ENCODE measurements at regions of chr9 and their contacts with region 1.

Region 1: DNA sequence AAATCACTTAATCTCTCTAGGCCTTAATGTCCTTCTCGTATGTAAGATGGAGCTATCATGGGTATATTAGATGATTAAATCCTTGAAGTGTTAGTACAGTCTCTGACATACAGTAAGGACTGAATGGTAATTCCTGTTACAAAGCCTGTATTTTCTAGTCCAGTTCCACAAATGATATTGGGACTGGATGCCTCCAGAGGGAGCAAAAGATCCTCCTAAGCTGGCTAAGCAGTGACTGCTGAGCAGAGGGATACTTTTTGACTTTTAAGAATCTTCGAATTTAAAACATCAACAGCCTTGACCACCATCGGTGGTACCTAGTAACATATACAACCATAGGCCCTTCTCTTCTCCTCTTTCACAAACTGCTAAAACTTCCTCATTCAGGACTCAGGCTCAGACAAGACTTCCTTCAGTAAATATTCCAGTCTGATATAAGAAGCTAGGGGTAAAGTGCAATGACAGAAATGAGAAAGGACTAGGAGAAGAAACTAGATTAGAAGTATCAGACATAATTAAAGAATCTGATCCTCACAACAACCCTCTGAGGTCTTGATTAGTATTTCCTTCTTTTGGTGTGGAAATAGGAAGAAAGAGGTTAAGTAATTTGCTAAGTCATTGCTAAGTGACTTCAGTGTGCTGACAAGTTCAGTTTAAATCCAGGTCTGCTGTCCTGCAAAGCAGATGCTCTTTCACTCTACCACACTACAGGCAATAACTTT is 13.9 kb downstream of the PTAR1 start:
- DNase-seq: peak; percentile 17
- H3K4me3 ChIP-seq: no peak overlapping the region
- H3K27ac ChIP-seq: no peak overlapping the region
- H3K4me1 ChIP-seq: peaks cover 28% of the 10 kb centered on the region
- H3K27me3 ChIP-seq: no peaks in the 10 kb centered on the region
- CTCF ChIP-seq: peak; percentile 48

Region 2: GRCh38 chr9:69085569-69086283 is 660.2 kb before region 1 on chr9:
- CTCF ChIA-PET with region 1: no interaction called
- POLR2A ChIA-PET with region 1: no interaction called
- intact Hi-C with region 1: no loop called
- DNase-seq: peak; percentile 14
- H3K4me3 ChIP-seq: no peak overlapping the region
- H3K27ac ChIP-seq: no peak overlapping the region
- H3K4me1 ChIP-seq: no peaks in the 10 kb centered on the region
- H3K27me3 ChIP-seq: no peaks in the 10 kb centered on the region
- CTCF ChIP-seq: no peak

Region 3: DNA sequence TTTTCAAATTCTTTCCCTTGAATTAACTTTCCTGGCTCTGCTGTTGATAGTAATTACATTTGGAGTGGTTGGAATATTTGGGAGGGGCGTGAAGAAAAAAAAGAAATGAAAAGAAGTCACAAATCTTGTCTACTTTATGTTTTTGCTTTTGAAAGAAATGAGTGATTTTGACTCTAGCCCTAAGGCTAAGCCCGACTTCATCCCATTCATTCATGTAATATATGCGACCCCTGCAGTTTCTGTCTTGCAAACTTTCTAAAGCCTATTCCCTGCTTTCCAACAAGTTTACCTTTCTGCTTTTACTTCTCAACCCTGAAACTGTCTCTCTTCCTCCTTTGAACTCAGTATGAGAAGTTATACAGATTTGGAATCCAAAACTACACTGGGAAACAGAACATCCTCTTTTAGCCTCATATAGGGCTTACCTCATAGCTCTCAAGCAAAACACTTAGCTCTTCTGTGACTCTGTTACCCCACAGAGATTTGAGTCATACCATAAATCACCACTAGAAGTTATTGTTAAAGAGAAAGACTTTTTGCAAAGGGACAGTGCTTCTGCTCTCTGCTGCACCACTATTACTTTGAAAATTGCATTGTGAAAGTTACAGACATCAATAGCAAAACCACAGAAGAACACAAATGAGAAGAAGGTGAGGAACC is 76.3 kb after region 1 on chr9:
- CTCF ChIA-PET with region 1: interaction called, 3 read pairs
- POLR2A ChIA-PET with region 1: no interaction called
- intact Hi-C with region 1: loop called (anchors 5 kb)
- DNase-seq: peak; percentile 83
- H3K4me3 ChIP-seq: no peak overlapping the region
- H3K27ac ChIP-seq: peak overlapping the region; percentile 72
- H3K4me1 ChIP-seq: peaks cover 64% of the 10 kb centered on the region
- H3K27me3 ChIP-seq: no peaks in the 10 kb centered on the region
- CTCF ChIP-seq: peak; percentile 39; the same call in 1 of the 2 replicates

Measured in A673 (cell line).